ENCODE measurements at regions of chr17 and their contacts with region 1.

Region 1: GRCh38 chr17:29363716-29364115 is 26.4 kb upstream of the TAOK1 start:
- DNase-seq: no peak

Region 2: DNA sequence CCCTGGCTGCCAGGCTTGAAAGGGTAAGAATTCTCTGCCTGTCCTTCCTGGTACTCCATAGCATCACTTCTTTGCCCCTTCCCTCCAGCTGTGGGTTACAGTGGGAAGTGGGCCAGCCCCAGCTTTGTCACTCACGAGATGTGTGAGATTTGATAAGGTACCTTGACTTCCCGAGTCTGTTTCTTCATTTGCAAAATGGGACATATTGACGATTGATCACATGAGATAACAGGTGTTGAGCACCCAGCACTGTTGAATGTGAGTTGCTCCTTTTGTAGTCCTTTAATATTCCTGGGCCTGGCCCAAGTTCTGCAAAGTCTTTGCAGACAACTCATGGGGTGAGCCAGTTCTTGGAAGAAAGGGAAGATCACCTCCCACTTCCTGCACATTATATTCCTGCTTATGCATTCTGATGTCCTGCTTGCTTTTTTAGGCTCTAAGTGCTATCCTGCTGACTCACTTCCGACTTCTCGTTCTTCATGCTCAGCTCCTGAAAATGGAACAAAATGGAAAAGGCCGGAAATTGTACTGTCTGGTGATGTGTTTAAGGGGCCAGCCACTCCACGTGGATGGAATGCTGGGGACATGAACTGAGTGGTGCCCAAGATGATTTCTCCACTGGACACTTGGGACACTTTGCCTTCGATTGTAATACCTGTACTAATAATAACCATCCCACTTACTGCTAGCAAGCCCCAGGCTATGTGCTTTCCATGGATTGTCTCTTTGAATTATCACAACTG is 1329.6 kb before region 1 on chr17:
- intact Hi-C with region 1: no loop called
- DNase-seq: no peak

Region 3: DNA sequence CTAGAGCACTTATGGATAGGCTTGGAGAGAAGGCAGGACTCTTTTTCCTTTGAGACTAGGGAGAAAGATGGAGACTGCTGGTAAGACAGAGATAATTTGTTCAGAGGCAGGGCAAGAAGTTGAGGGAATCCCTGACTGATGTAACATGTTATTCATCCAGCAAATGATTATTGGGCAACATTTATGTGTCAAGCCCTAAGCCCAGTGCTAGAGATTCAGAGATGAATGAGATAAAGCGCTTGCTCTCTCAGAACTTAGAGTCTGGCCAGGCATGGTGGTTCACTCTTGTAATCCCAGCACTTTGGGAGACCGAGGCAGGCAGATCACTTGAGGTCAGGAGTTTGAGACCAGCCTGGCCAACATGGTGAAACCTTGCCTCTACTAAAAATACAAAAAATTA is 22.0 kb before region 1 on chr17:
- intact Hi-C with region 1: no loop called
- DNase-seq: no peak

Region 4: DNA sequence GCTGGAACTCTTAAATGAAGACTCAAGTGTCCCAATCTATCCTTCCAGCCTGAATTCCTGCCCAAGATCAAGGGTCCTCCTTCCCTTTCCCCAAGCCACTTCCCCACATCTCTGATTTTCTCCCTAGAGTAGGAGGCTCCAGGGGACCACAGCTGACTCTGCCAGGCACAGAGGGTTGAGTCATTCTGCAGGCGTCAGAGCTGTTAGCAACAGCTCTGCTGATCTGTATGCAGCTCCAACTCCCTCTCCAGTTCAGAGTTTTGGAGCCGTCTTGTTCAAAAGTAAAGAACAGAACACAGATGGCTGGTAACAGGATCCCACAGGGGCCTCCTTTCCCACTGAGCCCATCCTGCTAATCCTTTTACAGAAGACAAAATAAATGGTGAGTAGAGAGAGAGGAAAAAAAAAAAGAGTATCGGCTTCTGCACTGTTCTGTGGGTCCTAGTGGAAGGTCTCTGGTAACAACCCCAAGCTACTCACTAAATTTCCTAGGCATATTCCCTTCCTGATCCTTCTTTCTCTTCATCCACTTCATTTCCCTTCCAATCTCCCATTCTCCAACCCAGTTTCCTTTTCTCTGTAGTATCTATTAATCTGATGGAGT is 13.1 kb after region 1 on chr17:
- intact Hi-C with region 1: no loop called
- DNase-seq: peak; percentile 71

Region 5: GRCh38 chr17:29390851-29391631 is 27.3 kb after region 1 on chr17:
- intact Hi-C with region 1: loop called in 1 of 2 experiments (anchors 1 kb)
- DNase-seq: peak; percentile 58

Region 6: GRCh38 chr17:29399634-29400033 is 35.9 kb after region 1 on chr17:
- intact Hi-C with region 1: loop called in 1 of 2 experiments (anchors 1 kb)
- DNase-seq: no peak

Measured in posterior vena cava (tissue), 2 donors.